Heart left ventricle (tissue), 16 donors: ENCODE measurements at regions of chr5 and their contacts with region 1.

Region 1: DNA sequence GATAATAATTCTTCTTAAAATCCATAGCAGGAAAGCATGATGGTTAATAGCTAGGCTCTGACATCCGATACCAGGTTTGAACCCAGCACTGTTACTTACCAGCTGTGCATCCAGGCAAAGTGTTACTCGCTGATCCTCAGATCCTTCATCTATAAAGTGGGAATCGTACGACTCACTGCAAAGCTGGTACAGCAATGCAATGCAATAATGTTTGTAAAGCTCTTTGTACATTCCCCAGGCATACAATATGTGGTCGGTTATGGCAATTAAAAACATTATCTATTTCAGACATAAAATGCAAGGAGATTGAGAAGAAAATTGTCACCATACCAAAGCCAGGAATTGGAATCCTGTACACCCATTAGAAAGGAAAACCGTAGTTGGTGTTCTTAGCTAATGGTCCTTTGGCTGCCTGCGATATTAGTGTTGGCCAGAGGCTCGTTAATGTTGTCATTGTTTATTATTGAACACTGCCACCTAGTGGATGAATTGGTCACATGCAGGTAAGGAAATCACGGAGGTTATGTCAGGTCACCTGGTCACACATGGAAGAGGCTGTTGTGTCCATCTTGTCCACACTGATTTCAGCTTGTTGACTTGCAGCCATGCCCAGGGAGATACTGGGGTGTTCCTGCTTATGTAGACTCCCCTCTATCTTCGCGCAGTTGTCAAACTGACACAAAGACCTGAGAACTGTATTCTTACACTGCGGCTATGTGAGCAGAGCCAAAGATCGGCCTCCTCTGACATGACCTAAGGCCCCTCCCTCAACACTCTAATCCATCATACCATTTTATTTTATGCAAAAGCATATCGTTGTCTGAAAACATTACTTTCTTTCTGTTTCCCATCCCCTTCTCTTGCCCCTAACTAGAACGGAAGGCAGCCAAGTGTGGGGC is 87.5 kb upstream of the PPP2R2B start:
- DNase-seq: peak in 4 of 5 donors; percentile 25 to 56 (median 43)
- ATAC-seq: peak; percentile 67 to 92 (median 88)
- H3K4me3 ChIP-seq: no peak overlapping the region
- H3K27ac ChIP-seq: no peak overlapping the region
- H3K4me1 ChIP-seq: peaks cover 0 to 3% (median 0%) of the 10 kb centered on the region in 12 donors
- H3K27me3 ChIP-seq: no peaks in the 10 kb centered on the region
- CTCF ChIP-seq: peak; percentile 83 to 97 (median 88)
- POLR2A ChIP-seq: no peak

Region 2: GRCh38 chr5:146533260-146533857 is 432.7 kb before region 1 on chr5:
- intact Hi-C with region 1: loop called in 1 of 10 experiments (anchors 2 kb)
- DNase-seq: peak in 4 of 5 donors; percentile 34 to 48 (median 41)
- ATAC-seq: peak in 2 of 4 donors; percentile 52 to 62
- H3K4me3 ChIP-seq: no peak overlapping the region
- H3K27ac ChIP-seq: no peak overlapping the region
- H3K4me1 ChIP-seq: no peaks in the 10 kb centered on the region
- H3K27me3 ChIP-seq: peaks cover 0 to under 1% (median 0%) of the 10 kb centered on the region in 9 donors
- CTCF ChIP-seq: peak; percentile 60 to 83 (median 70)
- POLR2A ChIP-seq: no peak

Region 3: DNA sequence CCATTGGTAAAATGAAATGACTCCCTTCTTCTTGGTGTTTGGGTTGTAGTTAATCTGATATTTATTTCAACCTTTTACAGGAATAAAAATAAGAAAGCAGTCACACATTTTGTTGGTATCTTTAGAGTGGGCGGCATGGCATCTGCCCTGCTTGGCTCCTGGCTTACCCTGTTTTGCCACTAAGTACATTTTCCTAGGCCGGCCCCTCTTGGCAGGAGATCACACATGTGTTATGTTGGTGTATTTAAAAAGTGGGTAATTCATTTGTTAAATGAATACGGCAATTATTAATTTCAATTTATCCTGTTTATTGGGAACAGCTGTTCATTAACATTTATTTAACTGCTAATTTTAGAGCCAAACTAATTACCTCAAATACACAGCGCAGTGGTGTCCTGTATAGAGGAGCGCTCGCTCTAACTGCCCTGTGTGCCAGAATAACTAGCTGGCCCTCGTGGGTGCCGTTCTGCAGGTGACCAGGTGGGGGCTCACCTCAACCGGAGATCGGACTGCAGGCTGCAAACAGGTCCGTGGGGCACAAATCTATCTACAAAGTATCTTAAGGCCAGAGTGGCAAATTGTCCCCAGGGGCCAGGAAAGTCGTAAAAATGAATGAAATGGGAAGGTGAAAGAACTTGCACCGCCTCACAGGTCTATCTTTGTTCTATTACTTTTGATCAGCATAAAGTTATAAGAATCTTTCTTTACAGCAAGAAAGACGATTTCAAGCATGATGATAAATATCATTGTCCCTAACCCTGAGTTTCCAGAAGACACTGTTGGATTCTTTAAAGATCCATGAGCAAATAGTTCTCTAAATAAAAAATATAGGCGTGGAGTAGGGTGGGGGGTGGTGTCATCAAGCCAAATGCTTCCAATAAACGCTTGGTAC is 423.8 kb before region 1 on chr5:
- intact Hi-C with region 1: loop called (anchors 1 to 5 kb)
- DNase-seq: peak; percentile 51 to 76 (median 59)
- ATAC-seq: peak in 3 of 4 donors; percentile 73 to 87 (median 86)
- H3K4me3 ChIP-seq: no peak overlapping the region
- H3K27ac ChIP-seq: no peak overlapping the region
- H3K4me1 ChIP-seq: peaks cover 0 to 8% (median 0%) of the 10 kb centered on the region in 12 donors
- H3K27me3 ChIP-seq: peaks cover 0 to 4% (median 0%) of the 10 kb centered on the region in 9 donors
- CTCF ChIP-seq: peak; percentile 60 to 81 (median 74)
- POLR2A ChIP-seq: no peak

Region 4: DNA sequence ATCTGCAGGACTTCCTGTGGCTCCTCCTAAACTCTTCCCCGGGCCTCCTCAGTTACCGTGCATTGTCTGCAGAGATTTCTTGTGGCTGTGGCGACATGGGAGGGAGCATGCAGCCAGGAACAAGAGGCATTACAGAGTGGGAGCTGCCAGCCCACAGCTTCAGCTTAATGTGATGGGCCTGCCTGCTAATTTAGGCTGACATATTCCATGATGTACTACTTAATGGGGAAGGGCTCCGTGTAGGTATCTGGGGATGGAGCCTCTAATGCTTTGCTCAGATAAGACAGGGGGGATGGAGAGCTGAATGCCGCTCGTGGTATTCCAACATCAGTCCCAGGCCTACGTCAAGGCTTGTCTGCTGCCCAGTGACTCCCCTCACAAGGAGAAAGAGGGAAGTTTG is 312.4 kb before region 1 on chr5:
- intact Hi-C with region 1: loop called in 1 of 10 experiments (anchors 10 kb)
- DNase-seq: no peak
- ATAC-seq: no peak
- H3K4me3 ChIP-seq: no peak overlapping the region
- H3K27ac ChIP-seq: no peak overlapping the region
- H3K4me1 ChIP-seq: no peaks in the 10 kb centered on the region
- H3K27me3 ChIP-seq: no peaks in the 10 kb centered on the region
- CTCF ChIP-seq: no peak
- POLR2A ChIP-seq: no peak

Region 5: GRCh38 chr5:146662229-146662628 is 303.8 kb before region 1 on chr5:
- intact Hi-C with region 1: loop called in 3 of 10 experiments (anchors 5 to 10 kb)
- DNase-seq: no peak
- ATAC-seq: no peak
- H3K4me3 ChIP-seq: no peak overlapping the region
- H3K27ac ChIP-seq: no peak overlapping the region
- H3K4me1 ChIP-seq: no peaks in the 10 kb centered on the region
- H3K27me3 ChIP-seq: no peaks in the 10 kb centered on the region
- CTCF ChIP-seq: peak; percentile 11 to 59 (median 38)
- POLR2A ChIP-seq: no peak

Region 6: DNA sequence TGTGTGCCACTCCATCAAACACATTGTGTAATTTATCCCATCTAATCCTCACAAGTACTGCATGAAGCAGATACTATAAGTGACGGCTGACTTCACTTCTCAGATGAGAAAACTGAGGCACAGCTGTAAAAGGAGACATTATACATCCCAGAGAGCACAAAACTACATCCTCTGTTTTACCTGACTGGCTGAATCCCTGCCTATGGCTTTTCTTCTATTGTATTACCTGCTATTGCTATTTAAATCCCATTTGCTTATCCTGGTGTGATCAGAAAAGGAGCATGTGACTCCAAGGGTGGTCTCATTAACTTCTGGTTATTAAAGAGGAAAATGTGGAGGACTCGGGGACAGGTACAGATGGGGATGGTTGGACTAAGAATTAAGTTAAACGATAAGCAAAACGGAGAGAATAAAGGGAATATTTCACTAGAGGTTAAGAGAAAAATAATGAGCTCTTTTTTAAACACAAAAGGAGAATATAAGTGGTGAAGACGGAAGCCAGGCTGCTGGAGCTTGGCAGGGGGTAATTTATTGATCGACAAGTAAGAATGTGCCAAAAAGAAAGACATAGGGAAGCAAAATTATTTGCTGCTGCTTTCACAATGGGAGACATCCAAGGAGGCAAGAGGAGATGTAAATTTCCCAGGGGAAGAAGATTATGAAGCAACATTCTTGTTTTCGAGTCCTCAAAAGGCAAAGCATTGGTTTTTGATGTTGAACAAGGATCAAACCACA is 294.3 kb before region 1 on chr5:
- intact Hi-C with region 1: loop called in 1 of 10 experiments (anchors 5 kb)
- DNase-seq: no peak
- ATAC-seq: no peak
- H3K4me3 ChIP-seq: no peak overlapping the region
- H3K27ac ChIP-seq: no peak overlapping the region
- H3K4me1 ChIP-seq: peaks cover 0 to 4% (median 0%) of the 10 kb centered on the region in 12 donors
- H3K27me3 ChIP-seq: no peaks in the 10 kb centered on the region
- CTCF ChIP-seq: no peak
- POLR2A ChIP-seq: no peak

Region 7: GRCh38 chr5:147188200-147189108 is 222.4 kb after region 1 on chr5:
- intact Hi-C with region 1: loop called in 3 of 10 experiments (anchors 10 kb)
- DNase-seq: peak in 2 of 5 donors; percentile 25 to 29
- ATAC-seq: peak in 1 of 4 donors; percentile 75
- H3K4me3 ChIP-seq: peak overlapping the region in 4 of 12 donors; percentile 14 to 27 (median 26)
- H3K27ac ChIP-seq: no peak overlapping the region
- H3K4me1 ChIP-seq: no peaks in the 10 kb centered on the region
- H3K27me3 ChIP-seq: peaks cover 0 to 14% (median 0%) of the 10 kb centered on the region in 9 donors
- CTCF ChIP-seq: peak; percentile 76 to 94 (median 83)
- POLR2A ChIP-seq: no peak